ENCODE measurements at regions of chr20 and their contacts with region 1.

Region 1: DNA sequence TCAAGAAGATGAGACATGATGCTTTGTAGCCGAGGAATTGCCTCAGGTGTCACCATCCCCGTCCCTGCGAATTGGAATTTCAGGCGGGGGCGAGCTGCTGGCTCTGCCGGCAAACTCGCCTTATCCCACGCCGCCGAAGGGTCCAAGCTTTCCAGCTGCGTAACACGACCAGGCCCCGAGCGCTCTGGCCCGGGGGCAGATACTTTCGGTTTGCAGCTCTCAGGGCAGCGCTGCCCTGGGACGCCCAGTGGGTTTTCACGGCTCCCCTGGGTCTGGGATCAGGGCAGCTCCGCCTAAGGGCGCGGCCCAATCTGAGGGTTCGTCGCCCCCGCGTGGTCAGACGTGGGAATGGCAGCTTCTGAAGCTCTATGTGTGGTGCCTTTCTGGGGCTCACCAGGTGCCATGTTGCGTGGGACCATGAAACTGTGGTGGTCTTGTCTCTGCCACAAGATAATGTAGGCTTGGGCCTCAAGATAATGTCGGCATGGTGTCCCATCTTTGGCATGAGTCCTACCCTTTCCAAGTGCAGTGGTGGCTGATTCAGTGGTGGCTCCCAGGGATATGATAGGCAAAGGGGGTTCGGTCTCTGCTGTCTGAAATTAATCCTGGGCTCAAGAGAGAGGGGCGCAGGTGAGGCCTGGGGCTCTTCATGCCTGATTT is 20.9 kb downstream of the PIGT start:
- DNase-seq: peak; percentile 95 to 98
- H3K4me3 ChIP-seq: peak overlapping the region; percentile 43
- H3K4me3 Mint-ChIP-seq: peak overlapping the region; percentile 84
- H3K27ac Mint-ChIP-seq: peak overlapping the region; percentile 71
- H3K4me1 ChIP-seq: peaks cover 25% of the 10 kb centered on the region
- H3K4me1 Mint-ChIP-seq: peaks cover 34% of the 10 kb centered on the region
- H3K27me3 ChIP-seq: no peaks in the 10 kb centered on the region
- H3K27me3 Mint-ChIP-seq: no peaks in the 10 kb centered on the region
- CTCF ChIP-seq: peak; percentile 99 to 100

Region 2: DNA sequence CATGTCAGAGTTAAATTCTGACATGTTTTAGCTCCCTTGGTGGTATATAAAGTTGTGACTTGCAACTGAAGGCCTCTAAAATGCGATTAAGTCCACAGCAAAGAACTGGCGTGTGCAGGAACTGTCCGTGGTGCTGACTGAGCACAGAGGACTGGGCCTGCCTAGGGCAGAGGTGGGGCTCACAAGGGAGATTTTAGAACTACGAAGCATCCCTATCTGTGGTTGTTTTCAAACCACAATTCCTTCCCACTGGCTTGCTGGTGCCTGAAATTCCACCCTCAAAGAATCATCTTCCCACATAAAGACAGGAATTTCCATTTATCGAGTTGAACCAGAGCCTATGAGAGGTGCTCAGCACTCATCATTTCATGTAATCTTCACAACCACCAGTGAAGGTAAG is 656.6 kb before region 1 on chr20:
- CTCF ChIA-PET with region 1: no interaction called
- POLR2A ChIA-PET with region 1: no interaction called
- intact Hi-C with region 1: no loop called
- DNase-seq: peak; percentile 76 to 88
- H3K4me3 ChIP-seq: no peak overlapping the region
- H3K4me3 Mint-ChIP-seq: no peak overlapping the region
- H3K27ac Mint-ChIP-seq: no peak overlapping the region
- H3K4me1 ChIP-seq: no peaks in the 10 kb centered on the region
- H3K4me1 Mint-ChIP-seq: no peaks in the 10 kb centered on the region
- H3K27me3 ChIP-seq: no peaks in the 10 kb centered on the region
- H3K27me3 Mint-ChIP-seq: peaks cover 9% of the 10 kb centered on the region
- CTCF ChIP-seq: no peak

Region 3: GRCh38 chr20:45174434-45175364 is 262.2 kb before region 1 on chr20 and contains the start of gene PI3:
- CTCF ChIA-PET with region 1: no interaction called
- POLR2A ChIA-PET with region 1: no interaction called
- intact Hi-C with region 1: no loop called
- DNase-seq: peak; percentile 70 to 85
- H3K4me3 ChIP-seq: no peak within 1 kb of the TSS
- H3K4me3 Mint-ChIP-seq: no peak within 1 kb of the TSS
- H3K27ac Mint-ChIP-seq: no peak within 1 kb of the TSS
- H3K4me1 ChIP-seq: peaks cover 10% of the 10 kb centered on the region
- H3K4me1 Mint-ChIP-seq: no peaks in the 10 kb centered on the region
- H3K27me3 ChIP-seq: no peaks in the 10 kb centered on the region
- H3K27me3 Mint-ChIP-seq: peaks cover 7% of the 10 kb centered on the region
- CTCF ChIP-seq: no peak
- total RNA-seq, gene PI3: 3.7 and 6.8 TPM in 2 replicates

Region 4: DNA sequence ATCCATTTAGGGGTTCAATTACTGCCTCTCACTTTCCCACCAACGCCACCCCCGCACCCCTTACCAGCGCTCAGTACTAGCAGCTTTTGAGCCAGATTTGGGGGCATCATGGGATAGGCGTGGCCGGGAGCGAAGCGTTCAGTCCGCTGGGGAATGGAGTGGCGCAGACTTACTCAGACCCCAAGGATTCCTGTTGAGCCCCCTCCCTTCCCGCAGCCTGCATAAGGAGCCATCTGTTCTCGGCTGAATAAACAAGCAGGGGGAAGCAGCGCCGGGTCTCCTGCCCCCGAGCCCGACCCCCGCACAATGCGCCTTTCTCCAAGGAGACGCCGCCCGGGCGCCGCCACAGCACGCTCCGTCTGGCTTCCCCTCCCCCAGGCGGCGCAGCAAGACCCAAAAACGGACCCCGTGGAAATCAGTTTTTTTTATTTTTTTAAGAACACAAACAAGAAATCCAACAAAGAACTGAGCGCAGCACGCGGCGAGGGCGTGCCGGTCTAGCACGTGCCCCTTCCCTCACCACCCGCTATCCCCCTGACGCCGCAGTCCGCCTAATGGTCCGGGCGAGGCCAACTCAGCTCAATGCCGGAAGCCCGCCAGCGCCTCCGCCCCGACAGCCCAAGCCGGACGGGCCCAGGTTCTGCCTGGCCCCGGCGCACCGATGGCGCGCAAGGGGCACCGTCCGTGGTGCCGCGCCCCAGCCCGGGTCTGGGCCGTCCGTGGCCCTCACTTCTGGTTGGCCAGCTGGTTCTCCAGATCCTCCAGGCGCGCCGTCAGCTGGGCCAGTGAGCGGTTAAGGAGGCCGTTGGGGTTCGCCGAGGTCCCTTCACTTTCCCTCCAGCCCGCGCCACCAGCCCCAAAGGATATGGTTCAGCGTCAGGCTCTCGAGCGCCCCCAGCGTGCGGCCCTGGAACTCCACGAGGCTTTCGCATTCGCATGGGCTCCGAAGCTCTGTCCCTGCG is 143.5 kb before region 1 on chr20:
- CTCF ChIA-PET with region 1: interaction called, 11 read pairs
- POLR2A ChIA-PET with region 1: interaction called, 3 read pairs
- intact Hi-C with region 1: no loop called
- DNase-seq: peak; percentile 90 to 95
- H3K4me3 ChIP-seq: peak overlapping the region; percentile 63
- H3K4me3 Mint-ChIP-seq: peak overlapping the region; percentile 72
- H3K27ac Mint-ChIP-seq: no peak overlapping the region
- H3K4me1 ChIP-seq: 0 out of 2 replicates have a peak, but pooled peaks cover 3% of the 10 kb centered on the region
- H3K4me1 Mint-ChIP-seq: no peaks in the 10 kb centered on the region
- H3K27me3 ChIP-seq: peaks cover 4% of the 10 kb centered on the region; the same call in 1 of the 2 replicates
- H3K27me3 Mint-ChIP-seq: peaks cover 13% of the 10 kb centered on the region
- CTCF ChIP-seq: peak; percentile 100

Region 5: GRCh38 chr20:45322952-45323383 is 113.9 kb before region 1 on chr20:
- CTCF ChIA-PET with region 1: interaction called, 278 read pairs
- POLR2A ChIA-PET with region 1: interaction called, 10 read pairs
- intact Hi-C with region 1: loop called (anchors 1 kb)
- DNase-seq: peak; percentile 84 to 86
- H3K4me3 ChIP-seq: no peak overlapping the region
- H3K4me3 Mint-ChIP-seq: no peak overlapping the region
- H3K27ac Mint-ChIP-seq: peak overlapping the region; percentile 3
- H3K4me1 ChIP-seq: peaks cover 8% of the 10 kb centered on the region; the same call in 1 of the 2 replicates
- H3K4me1 Mint-ChIP-seq: no peaks in the 10 kb centered on the region
- H3K27me3 ChIP-seq: no peaks in the 10 kb centered on the region
- H3K27me3 Mint-ChIP-seq: no peaks in the 10 kb centered on the region
- CTCF ChIP-seq: peak; percentile 55 to 79

Region 6: DNA sequence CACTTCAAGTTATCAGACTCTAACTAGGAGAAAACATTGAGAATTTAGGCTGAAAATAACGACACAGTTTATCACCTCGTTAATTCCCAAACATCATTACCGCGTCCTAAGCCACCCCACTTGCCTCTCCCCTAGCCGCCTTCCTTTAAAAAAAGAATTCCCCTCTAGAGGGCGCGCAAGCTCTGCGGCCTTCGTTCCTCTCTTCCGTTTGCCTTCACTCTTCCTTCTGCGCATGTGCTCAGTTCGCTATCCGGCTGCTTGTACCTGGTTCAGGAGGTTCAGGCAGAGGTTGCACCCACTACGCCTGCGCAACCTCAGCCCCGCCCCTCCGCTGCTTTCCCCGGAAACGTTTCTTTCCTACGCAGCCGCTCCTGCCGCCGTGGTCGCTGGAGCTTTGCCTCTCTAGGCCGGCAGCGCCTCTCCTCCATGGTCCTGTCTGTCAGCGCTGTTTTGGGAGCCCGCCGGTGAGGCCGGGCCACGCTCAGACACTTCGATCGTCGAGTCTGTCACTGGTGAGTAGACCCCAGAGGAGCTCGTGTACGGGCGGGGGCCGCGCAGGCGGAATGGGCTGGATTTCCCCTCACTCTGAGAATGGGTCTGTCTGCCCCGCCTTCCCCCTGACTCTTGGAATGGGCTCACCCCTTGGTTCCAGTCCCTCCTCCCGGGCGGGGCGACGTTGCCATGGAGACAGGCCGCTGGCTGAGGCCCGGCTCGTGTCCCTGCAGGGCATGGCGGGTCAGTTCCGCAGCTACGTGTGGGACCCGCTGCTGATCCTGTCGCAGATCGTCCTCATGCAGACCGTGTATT is 73.9 kb before region 1 on chr20 and contains the start of gene SYS1:
- CTCF ChIA-PET with region 1: interaction called, 119 read pairs
- POLR2A ChIA-PET with region 1: interaction called, 18 read pairs
- intact Hi-C with region 1: loop called (anchors 1 kb)
- DNase-seq: peak; percentile 100
- H3K4me3 ChIP-seq: peak within 1 kb of the TSS; percentile 93
- H3K4me3 Mint-ChIP-seq: peak within 1 kb of the TSS; percentile 87
- H3K27ac Mint-ChIP-seq: peak within 1 kb of the TSS; percentile 91
- H3K4me1 ChIP-seq: peaks cover 46% of the 10 kb centered on the region
- H3K4me1 Mint-ChIP-seq: peaks cover 46% of the 10 kb centered on the region
- H3K27me3 ChIP-seq: no peaks in the 10 kb centered on the region
- H3K27me3 Mint-ChIP-seq: no peaks in the 10 kb centered on the region
- CTCF ChIP-seq: peak; percentile 98
- total RNA-seq, gene SYS1: 62.1 and 67.1 TPM in 2 replicates

Region 7: DNA sequence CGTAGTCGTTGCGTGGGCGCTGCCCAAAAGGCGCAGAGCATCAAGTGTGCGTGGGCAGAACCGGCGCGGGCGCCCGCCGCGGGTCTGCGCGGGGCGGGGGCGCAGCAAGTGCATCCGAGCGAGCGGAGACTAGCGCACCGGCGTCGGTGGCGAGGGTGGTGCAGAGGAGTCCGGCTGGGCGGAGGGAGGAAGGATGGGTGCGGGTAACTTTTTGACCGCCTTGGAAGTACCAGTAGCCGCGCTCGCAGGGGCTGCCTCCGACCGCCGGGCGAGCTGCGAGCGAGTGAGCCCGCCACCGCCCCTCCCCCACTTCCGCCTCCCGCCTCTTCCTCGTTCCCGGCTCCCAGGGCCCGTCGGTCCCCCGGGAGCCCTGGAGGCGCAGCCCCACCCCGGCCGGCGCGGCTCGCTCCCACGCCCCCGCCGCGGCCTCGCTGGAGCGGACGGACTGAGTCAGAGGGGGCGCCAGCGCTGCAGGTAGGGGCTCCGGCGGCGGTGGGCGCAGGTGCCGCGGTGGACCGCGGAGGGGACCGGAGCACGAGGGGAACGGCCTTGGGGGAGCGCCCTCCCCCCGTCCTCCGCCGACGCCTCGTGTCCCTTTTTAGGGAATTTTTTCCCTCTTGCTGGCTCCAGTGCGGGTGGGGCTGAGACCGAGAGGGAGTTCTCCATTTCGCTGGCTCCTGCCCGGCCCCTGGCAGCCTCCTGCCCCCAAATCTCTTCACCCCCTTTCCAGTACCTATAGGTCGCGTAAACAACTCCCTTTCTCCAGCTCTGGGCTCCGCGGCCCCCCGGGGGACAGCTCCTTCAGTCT is 30.4 kb before region 1 on chr20:
- CTCF ChIA-PET with region 1: interaction called, 17 read pairs
- POLR2A ChIA-PET with region 1: no interaction called
- intact Hi-C with region 1: no loop called
- DNase-seq: peak; percentile 80 to 82
- H3K4me3 ChIP-seq: peak overlapping the region; percentile 98
- H3K4me3 Mint-ChIP-seq: peak overlapping the region; percentile 84
- H3K27ac Mint-ChIP-seq: peak overlapping the region; percentile 60
- H3K4me1 ChIP-seq: no peaks in the 10 kb centered on the region
- H3K4me1 Mint-ChIP-seq: no peaks in the 10 kb centered on the region
- H3K27me3 ChIP-seq: no peaks in the 10 kb centered on the region
- H3K27me3 Mint-ChIP-seq: no peaks in the 10 kb centered on the region
- CTCF ChIP-seq: peak in 1 of 2 experiments; percentile 16

Region 8: GRCh38 chr20:45456632-45457031 is 19.8 kb after region 1 on chr20:
- CTCF ChIA-PET with region 1: interaction called, 26 read pairs
- POLR2A ChIA-PET with region 1: interaction called, 3 read pairs
- intact Hi-C with region 1: no loop called
- DNase-seq: peak; percentile 68 to 73
- H3K4me3 ChIP-seq: no peak overlapping the region
- H3K4me3 Mint-ChIP-seq: no peak overlapping the region
- H3K27ac Mint-ChIP-seq: no peak overlapping the region
- H3K4me1 ChIP-seq: no peaks in the 10 kb centered on the region
- H3K4me1 Mint-ChIP-seq: no peaks in the 10 kb centered on the region
- H3K27me3 ChIP-seq: no peaks in the 10 kb centered on the region
- H3K27me3 Mint-ChIP-seq: no peaks in the 10 kb centered on the region
- CTCF ChIP-seq: peak in 1 of 2 experiments; percentile 60